B cell (primary cell): ENCODE measurements at regions of chr12 and their contacts with region 1.

Region 1: GRCh38 chr12:46071769-46072624 is 81.6 kb upstream of the SCAF11 start:
- DNase-seq: peak; percentile 77
- ATAC-seq: peak; percentile 93
- H3K4me3 ChIP-seq: no peak overlapping the region
- H3K4me3 Mint-ChIP-seq: no peak overlapping the region
- H3K27ac ChIP-seq: no peak overlapping the region
- H3K27ac Mint-ChIP-seq: no peak overlapping the region
- H3K4me1 ChIP-seq: peaks cover 3 to 7% of the 10 kb centered on the region in 2 donors
- H3K4me1 Mint-ChIP-seq: peaks cover 8% of the 10 kb centered on the region
- H3K27me3 ChIP-seq: no peaks in the 10 kb centered on the region
- H3K27me3 Mint-ChIP-seq: no peaks in the 10 kb centered on the region
- CTCF ChIP-seq: peak; percentile 97

Region 2: DNA sequence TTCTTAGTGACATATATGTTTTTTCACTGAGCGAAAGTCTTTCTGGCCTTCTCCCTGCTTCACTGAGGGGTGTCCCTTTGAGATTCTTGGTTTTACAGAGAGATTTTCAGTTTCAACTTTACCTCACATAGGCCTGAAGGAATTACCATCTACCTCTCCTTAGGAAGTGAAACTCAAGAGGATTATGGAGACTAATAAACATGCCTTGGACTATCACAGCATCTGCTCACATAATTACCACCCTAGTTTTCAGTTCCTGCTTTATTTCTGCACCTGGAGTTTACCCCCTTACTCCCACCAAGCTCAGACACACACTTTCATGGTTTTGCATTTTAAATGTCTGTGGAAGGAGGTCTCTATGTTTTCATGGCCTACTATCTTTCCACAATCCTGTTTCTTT is 36.7 kb after region 1 on chr12:
- CTCF ChIA-PET with region 1: interaction called, 33 read pairs
- POLR2A ChIA-PET with region 1: no interaction called
- intact Hi-C with region 1: no loop called
- DNase-seq: peak; percentile 80
- ATAC-seq: peak; percentile 83
- H3K4me3 ChIP-seq: peak overlapping the region in 1 of 5 experiments; percentile 8
- H3K4me3 Mint-ChIP-seq: peak overlapping the region; percentile 49
- H3K27ac ChIP-seq: peak overlapping the region; percentile 53 to 75
- H3K27ac Mint-ChIP-seq: peak overlapping the region; percentile 85
- H3K4me1 ChIP-seq: peaks cover 45 to 48% of the 10 kb centered on the region in 2 donors
- H3K4me1 Mint-ChIP-seq: peaks cover 45% of the 10 kb centered on the region
- H3K27me3 ChIP-seq: no peaks in the 10 kb centered on the region
- H3K27me3 Mint-ChIP-seq: no peaks in the 10 kb centered on the region
- CTCF ChIP-seq: no peak

Region 3: GRCh38 chr12:46303039-46303666 is 231.2 kb after region 1 on chr12:
- CTCF ChIA-PET with region 1: interaction called, 41 read pairs
- POLR2A ChIA-PET with region 1: interaction called, 3 read pairs
- intact Hi-C with region 1: loop called (anchors 1 kb)
- DNase-seq: peak; percentile 73
- ATAC-seq: peak; percentile 71
- H3K4me3 ChIP-seq: no peak overlapping the region
- H3K4me3 Mint-ChIP-seq: no peak overlapping the region
- H3K27ac ChIP-seq: no peak overlapping the region
- H3K27ac Mint-ChIP-seq: peak overlapping the region; percentile 28
- H3K4me1 ChIP-seq: peaks cover 19 to 20% of the 10 kb centered on the region in 2 donors
- H3K4me1 Mint-ChIP-seq: peaks cover 29% of the 10 kb centered on the region
- H3K27me3 ChIP-seq: no peaks in the 10 kb centered on the region
- H3K27me3 Mint-ChIP-seq: no peaks in the 10 kb centered on the region
- CTCF ChIP-seq: peak; percentile 72

Region 4: GRCh38 chr12:46933947-46934346 is 862.0 kb after region 1 on chr12:
- CTCF ChIA-PET with region 1: interaction called, 4 read pairs
- POLR2A ChIA-PET with region 1: no interaction called
- intact Hi-C with region 1: loop called (anchors 5 kb)
- DNase-seq: peak; percentile 26
- ATAC-seq: no peak
- H3K4me3 ChIP-seq: no peak overlapping the region
- H3K4me3 Mint-ChIP-seq: no peak overlapping the region
- H3K27ac ChIP-seq: no peak overlapping the region
- H3K27ac Mint-ChIP-seq: no peak overlapping the region
- H3K4me1 ChIP-seq: no peaks in the 10 kb centered on the region
- H3K4me1 Mint-ChIP-seq: no peaks in the 10 kb centered on the region
- H3K27me3 ChIP-seq: no peaks in the 10 kb centered on the region
- H3K27me3 Mint-ChIP-seq: peaks cover 20% of the 10 kb centered on the region
- CTCF ChIP-seq: peak; percentile 38

Region 5: GRCh38 chr12:46983393-46984266 is 911.6 kb after region 1 on chr12:
- CTCF ChIA-PET with region 1: interaction called, 7 read pairs
- POLR2A ChIA-PET with region 1: no interaction called
- intact Hi-C with region 1: loop called (anchors 1 kb)
- DNase-seq: peak; percentile 51
- ATAC-seq: peak; percentile 53
- H3K4me3 ChIP-seq: no peak overlapping the region
- H3K4me3 Mint-ChIP-seq: no peak overlapping the region
- H3K27ac ChIP-seq: no peak overlapping the region
- H3K27ac Mint-ChIP-seq: no peak overlapping the region
- H3K4me1 ChIP-seq: no peaks in the 10 kb centered on the region
- H3K4me1 Mint-ChIP-seq: peaks cover 7% of the 10 kb centered on the region
- H3K27me3 ChIP-seq: no peaks in the 10 kb centered on the region
- H3K27me3 Mint-ChIP-seq: peaks cover 23% of the 10 kb centered on the region
- CTCF ChIP-seq: peak; percentile 70

Region 6: DNA sequence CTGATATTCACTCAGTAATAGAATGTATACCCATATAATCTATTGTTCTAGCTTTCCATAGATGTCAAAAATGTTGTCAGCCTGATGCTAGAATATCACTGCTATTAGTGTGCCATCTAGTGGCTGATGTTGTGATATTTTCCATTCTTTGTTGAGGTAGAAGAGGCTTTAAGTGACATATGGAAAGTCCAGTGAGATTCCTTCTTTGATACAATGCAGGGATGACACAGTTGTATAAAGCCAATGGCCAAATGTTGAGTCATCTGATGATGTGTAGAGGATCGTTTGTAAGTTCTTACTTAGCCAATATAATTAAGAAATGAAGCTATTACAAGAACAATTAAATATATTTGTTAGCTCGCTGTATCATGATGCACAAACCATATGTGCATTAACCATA is 949.3 kb after region 1 on chr12:
- CTCF ChIA-PET with region 1: interaction called, 46 read pairs
- POLR2A ChIA-PET with region 1: no interaction called
- intact Hi-C with region 1: loop called (anchors 1 kb)
- DNase-seq: peak; percentile 70
- ATAC-seq: peak; percentile 28
- H3K4me3 ChIP-seq: no peak overlapping the region
- H3K4me3 Mint-ChIP-seq: no peak overlapping the region
- H3K27ac ChIP-seq: no peak overlapping the region
- H3K27ac Mint-ChIP-seq: no peak overlapping the region
- H3K4me1 ChIP-seq: no peaks in the 10 kb centered on the region
- H3K4me1 Mint-ChIP-seq: no peaks in the 10 kb centered on the region
- H3K27me3 ChIP-seq: peaks cover 0 to 3% (median under 1%) of the 10 kb centered on the region in 4 experiments
- H3K27me3 Mint-ChIP-seq: peaks cover 9% of the 10 kb centered on the region
- CTCF ChIP-seq: peak; percentile 88